ENCODE measurements at regions of chr3 and their contacts with region 1.

Region 1: GRCh38 chr3:42190701-42191462 is 75.1 kb downstream of the CCK start:
- DNase-seq: peak; percentile 71
- H3K4me3 Mint-ChIP-seq: no peak overlapping the region
- H3K27ac Mint-ChIP-seq: no peak overlapping the region
- H3K4me1 Mint-ChIP-seq: peaks cover 37% of the 10 kb centered on the region
- H3K27me3 Mint-ChIP-seq: no peaks in the 10 kb centered on the region

Region 2: DNA sequence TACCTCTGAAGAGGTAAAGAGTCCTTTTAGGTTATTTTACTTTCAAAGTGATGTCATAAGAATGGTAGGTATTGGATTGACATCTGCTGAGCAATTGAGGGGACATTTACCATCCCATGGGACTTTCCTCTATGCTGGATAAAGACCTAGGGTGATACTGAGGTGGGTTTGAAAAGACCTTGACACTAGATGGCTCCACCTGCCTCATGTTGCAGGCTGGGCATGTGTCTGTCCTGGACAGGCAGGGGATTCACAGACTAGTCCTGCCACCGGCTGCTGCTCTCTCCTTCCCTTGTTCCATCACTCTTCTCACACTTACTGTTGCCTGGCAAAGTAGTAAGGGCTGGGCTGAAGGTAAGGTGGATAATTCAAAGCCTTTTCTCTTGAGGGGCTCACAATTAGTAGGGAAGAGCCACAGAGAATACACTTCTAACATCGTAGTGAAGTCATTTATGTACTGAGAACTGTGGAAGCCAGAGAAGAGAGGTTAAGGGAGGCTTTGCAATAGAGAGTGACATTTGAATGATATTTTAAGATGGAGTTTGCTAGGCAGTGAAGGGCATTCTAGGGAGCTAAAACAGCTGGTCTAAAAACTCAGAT is 72.0 kb before region 1 on chr3:
- CTCF ChIA-PET with region 1: interaction called, 43 read pairs
- POLR2A ChIA-PET with region 1: interaction called, 3 read pairs
- DNase-seq: peak; percentile 25
- H3K4me3 Mint-ChIP-seq: no peak overlapping the region
- H3K27ac Mint-ChIP-seq: no peak overlapping the region
- H3K4me1 Mint-ChIP-seq: peaks cover 17% of the 10 kb centered on the region
- H3K27me3 Mint-ChIP-seq: no peaks in the 10 kb centered on the region

Region 3: GRCh38 chr3:42159706-42160472 is 31.0 kb before region 1 on chr3:
- CTCF ChIA-PET with region 1: interaction called, 16 read pairs
- POLR2A ChIA-PET with region 1: no interaction called
- DNase-seq: peak; percentile 48
- H3K4me3 Mint-ChIP-seq: peak overlapping the region; percentile 14
- H3K27ac Mint-ChIP-seq: no peak overlapping the region
- H3K4me1 Mint-ChIP-seq: peaks cover 37% of the 10 kb centered on the region
- H3K27me3 Mint-ChIP-seq: no peaks in the 10 kb centered on the region

Region 4: GRCh38 chr3:42169579-42170120 is 21.2 kb before region 1 on chr3:
- CTCF ChIA-PET with region 1: interaction called, 30 read pairs
- POLR2A ChIA-PET with region 1: no interaction called
- DNase-seq: no peak
- H3K4me3 Mint-ChIP-seq: no peak overlapping the region
- H3K27ac Mint-ChIP-seq: no peak overlapping the region
- H3K4me1 Mint-ChIP-seq: peaks cover 19% of the 10 kb centered on the region
- H3K27me3 Mint-ChIP-seq: no peaks in the 10 kb centered on the region

Region 5: GRCh38 chr3:42179110-42179725 is 11.7 kb before region 1 on chr3:
- CTCF ChIA-PET with region 1: interaction called, 30 read pairs
- POLR2A ChIA-PET with region 1: interaction called, 3 read pairs
- DNase-seq: no peak
- H3K4me3 Mint-ChIP-seq: no peak overlapping the region
- H3K27ac Mint-ChIP-seq: no peak overlapping the region
- H3K4me1 Mint-ChIP-seq: peaks cover 4% of the 10 kb centered on the region
- H3K27me3 Mint-ChIP-seq: no peaks in the 10 kb centered on the region

Region 6: DNA sequence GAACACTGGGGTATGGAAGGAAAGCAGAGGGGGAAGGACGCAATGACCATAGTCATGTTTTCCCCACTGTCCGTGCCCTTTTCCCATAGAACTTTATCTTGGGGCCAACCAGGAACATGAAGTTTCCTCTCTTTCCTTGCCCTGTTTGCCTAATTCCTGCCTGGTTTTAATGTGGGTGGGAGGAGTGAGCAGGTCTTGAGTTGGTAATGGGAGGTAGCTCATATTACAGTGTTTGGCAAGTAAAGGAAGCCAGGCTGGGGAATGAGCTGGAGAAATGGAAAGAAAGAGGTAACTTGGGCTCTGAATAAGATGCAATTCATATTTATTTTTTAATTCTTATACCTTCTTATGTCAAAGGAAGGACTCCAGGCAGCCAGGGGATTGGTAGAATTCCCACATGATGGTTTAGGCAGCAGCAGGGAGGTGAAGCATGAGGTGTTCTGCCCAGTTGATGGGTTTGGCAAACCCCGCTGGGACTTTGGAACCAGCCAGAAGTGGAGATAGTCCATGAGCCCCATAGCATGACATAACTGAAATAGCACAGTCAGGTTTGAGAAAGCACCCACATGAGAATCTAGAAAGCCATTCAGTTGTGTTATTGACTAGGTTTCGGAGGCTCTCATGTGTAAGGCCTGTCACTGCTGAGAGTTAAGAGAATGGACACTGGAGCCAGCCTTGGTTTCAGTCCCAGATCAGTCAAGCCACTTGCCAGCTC is 15.1 kb after region 1 on chr3:
- CTCF ChIA-PET with region 1: interaction called, 16 read pairs
- POLR2A ChIA-PET with region 1: interaction called, 3 read pairs
- DNase-seq: no peak
- H3K4me3 Mint-ChIP-seq: no peak overlapping the region
- H3K27ac Mint-ChIP-seq: no peak overlapping the region
- H3K4me1 Mint-ChIP-seq: peaks cover 4% of the 10 kb centered on the region
- H3K27me3 Mint-ChIP-seq: no peaks in the 10 kb centered on the region

Region 7: GRCh38 chr3:42214565-42215283 is 23.8 kb after region 1 on chr3:
- CTCF ChIA-PET with region 1: interaction called, 28 read pairs
- POLR2A ChIA-PET with region 1: no interaction called
- DNase-seq: no peak
- H3K4me3 Mint-ChIP-seq: no peak overlapping the region
- H3K27ac Mint-ChIP-seq: no peak overlapping the region
- H3K4me1 Mint-ChIP-seq: peaks cover 50% of the 10 kb centered on the region
- H3K27me3 Mint-ChIP-seq: no peaks in the 10 kb centered on the region

Region 8: DNA sequence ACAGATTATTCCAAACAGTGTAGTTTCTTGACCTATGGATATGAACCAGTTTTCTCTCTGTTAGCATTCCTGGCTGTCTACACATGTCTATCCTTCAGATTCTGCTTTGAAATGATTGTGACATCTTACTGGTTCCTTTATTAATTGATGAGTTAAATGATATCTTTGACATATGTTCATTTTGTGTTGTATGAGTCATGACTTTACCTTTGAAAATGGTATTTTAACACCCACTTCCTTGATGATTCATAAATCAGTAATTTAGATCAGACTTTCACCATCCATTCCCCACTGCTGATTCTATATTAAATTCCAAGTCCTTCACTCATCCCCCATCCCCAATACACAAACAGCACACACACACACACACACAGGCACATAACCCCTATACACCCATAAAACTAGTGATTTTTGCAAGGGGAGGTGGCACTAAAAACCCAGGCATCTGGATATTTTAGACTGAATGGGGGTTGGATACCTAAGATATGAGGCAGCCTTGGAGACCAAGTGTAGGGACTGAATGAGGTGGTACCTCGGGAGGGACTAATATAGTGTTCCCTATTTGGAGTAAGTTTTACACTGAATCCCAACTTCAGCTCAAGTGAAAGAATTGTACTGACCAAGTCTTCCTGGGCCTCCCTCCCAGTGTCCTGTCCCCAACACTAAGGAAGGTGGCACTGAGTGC is 65.4 kb after region 1 on chr3:
- CTCF ChIA-PET with region 1: no interaction called
- POLR2A ChIA-PET with region 1: no interaction called
- DNase-seq: no peak
- H3K4me3 Mint-ChIP-seq: no peak overlapping the region
- H3K27ac Mint-ChIP-seq: no peak overlapping the region
- H3K4me1 Mint-ChIP-seq: peaks cover 4% of the 10 kb centered on the region
- H3K27me3 Mint-ChIP-seq: peaks cover 48% of the 10 kb centered on the region